AG04449 (cell line): ENCODE measurements at regions of chr17 and their contacts with region 1.

Region 1: DNA sequence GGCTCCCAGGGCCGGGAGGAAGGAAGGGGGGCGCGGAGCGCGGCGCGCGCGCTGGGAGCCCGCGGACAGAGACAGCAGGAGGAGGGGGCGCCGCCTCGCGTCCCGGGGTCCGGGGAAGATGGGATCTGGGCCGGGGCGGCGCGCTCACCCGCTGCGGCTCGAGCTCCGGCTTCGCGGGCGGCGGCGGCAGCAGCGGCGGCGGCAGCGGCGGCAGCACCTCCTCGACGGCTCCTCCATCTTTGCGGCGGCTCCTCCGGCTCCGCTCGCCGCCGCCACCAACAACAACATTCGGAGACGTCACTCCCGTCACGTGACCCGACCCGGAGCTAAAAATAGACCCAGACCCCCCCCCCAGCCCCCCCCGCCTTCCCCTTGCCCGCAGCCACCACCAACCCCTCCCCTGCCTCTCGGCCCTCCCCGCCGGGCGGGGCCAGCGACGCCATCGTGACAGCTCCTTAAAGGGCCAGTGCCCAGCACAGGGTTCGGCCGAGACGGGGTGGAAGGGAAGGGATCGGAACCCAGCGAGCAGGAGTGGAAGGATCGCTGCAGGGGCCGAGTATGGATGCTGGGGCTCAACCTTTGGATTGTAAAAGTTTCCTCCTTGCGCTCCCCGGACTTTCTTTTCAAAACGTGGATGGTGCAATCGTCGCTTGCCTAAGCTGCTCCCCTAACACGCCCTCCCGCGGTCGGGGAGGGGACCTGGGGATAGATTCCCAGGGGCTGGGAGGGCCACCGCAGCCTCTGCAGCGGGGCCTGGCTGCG is at the start of gene HDAC5:
- DNase-seq: peak; percentile 46
- H3K4me3 ChIP-seq: peak within 1 kb of the TSS; percentile 76
- CTCF ChIP-seq: peak; percentile 74

Region 2: DNA sequence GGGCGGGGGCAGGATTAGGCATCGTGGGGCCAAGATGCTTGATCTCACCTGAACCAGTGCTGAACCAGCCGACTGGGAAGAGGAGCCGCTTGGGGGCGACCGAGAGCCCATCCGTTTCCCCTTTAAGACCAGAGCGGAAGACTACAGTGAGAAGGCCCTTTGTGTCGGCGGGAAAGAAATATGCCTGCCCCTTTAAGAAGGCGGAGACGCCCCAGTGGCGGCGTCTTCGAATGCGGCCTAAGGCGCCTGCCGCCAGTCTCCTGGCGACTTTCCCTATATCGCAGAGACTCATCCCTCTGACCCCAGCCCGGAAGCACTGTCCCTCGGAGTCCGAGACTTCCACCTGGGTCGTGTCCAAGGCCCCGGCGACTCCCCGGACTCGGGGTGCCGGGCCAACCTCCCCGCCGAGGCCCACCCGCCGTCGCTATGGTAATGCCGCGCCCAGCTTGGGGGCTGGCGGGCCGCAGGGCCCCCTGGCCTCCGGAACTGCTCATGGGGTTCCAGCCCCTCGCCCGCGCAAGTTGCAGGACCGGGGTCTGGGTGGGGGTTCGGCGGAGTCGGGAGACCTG is 18.3 kb after region 1 on chr17 and contains the start of gene HROB:
- CTCF ChIA-PET with region 1: interaction called, 35 read pairs
- POLR2A ChIA-PET with region 1: interaction called, 5 read pairs
- DNase-seq: peak; percentile 87
- H3K4me3 ChIP-seq: peak within 1 kb of the TSS; percentile 77
- CTCF ChIP-seq: peak; percentile 92